Naive thymus-derived CD4-positive, alpha-beta T cell (primary cell): ENCODE measurements at regions of chr15 and their contacts with region 1.

Region 1: DNA sequence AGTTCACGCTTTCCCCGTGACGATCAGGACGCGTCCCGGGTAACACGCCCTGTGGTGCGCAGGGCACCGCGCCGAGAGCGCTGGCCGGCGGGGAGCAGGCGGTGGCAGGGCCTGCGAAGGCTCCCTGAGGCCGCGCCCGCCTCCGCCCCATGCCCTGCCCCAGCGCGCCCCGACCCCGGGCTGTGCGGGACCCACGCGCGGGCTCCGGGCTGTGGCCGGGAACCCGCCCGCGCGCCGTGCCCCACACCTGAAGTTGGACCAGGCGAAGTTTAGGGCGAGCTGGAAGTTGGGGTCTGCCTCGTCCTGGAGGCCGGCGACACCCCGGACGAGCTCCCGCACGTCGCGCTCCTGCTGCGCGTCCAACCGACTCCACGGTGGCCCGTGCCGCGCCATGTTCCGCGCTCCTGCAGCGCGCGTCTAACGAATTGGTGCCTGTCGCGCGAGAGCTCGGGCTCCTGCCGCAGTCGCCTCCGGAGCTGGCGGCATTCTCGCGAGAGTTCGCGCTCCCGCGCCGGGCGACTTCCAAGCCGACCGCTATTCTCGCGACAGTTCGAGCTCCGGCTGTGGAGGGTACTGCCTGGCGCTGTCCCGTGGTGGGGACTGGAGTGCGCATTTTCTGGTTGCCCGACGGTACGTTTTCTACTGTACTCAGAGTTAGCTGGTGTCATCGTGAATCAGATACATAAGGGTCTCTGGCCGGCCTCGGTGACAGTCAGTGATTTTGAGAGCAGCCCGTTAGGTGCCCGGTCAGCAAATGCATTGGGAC is at the start of gene TUBGCP5:
- DNase-seq: peak; percentile 93 to 98 (median 95)
- ATAC-seq: peak; percentile 97
- H3K4me3 ChIP-seq: peak within 1 kb of the TSS; percentile 78
- H3K4me3 Mint-ChIP-seq: peak within 1 kb of the TSS; percentile 91 to 99 (median 96)
- H3K27ac ChIP-seq: peak within 1 kb of the TSS; percentile 62
- H3K27ac Mint-ChIP-seq: peak within 1 kb of the TSS; percentile 86 to 97 (median 91)
- H3K4me1 ChIP-seq: peaks cover 13 to 14% of the 10 kb centered on the region in 2 donors
- H3K4me1 Mint-ChIP-seq: peaks cover 11 to 39% (median 24%) of the 10 kb centered on the region in 7 donors
- H3K27me3 ChIP-seq: no peaks in the 10 kb centered on the region
- H3K27me3 Mint-ChIP-seq: no peaks in the 10 kb centered on the region
- total RNA-seq, gene TUBGCP5: 15.7 to 28.6 (median 23.5) TPM

Region 2: DNA sequence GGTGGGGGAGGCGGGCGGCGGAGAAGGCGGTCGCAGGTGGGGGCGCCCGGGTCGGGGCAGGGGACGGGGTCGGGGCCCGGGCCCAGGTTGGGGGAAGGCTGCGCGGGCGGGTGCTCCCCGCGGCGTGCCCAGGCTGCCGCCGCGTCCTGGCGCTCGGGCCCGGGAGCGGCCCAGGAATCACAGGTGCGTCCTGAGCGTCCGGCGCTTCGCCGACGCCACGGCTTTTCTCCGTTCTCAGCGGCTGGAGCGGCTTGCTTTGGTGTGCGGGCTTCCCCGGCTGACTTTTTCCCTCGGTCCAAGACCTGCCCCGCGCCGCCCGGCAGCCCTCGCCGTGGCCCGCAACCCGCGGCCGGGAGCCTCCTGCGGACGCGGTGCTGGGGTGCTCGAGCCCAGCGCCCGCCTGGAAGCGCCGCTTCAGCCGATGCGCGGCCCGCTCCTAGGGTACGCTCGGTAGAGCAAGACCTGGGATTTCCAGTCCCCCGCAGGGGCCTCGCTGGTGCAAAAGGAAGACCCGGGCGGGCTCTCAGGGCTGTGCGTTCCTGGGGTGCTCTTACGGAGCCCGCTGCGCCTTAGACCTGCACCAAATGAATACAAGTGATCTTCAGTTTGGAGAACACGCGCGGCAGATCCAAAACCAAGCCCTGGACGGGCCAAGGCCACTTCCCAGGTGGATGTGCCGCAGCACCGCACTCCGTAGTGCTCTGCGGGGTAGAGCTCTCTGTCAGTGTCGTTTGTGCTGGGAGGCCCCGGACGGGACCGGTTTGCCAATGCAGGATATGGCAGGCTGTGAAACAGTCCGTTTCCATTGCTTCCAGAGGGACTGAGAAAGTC is 252.3 kb before region 1 on chr15:
- CTCF ChIA-PET with region 1: no interaction called
- POLR2A ChIA-PET with region 1: no interaction called
- intact Hi-C with region 1: loop called (anchors 1 to 5 kb)
- DNase-seq: peak in 7 of 9 donors; percentile 4 to 51 (median 23)
- ATAC-seq: peak; percentile 20
- H3K4me3 ChIP-seq: peak overlapping the region; percentile 66
- H3K4me3 Mint-ChIP-seq: peak overlapping the region; percentile 81 to 89 (median 85)
- H3K27ac ChIP-seq: peak overlapping the region; percentile 70
- H3K27ac Mint-ChIP-seq: peak overlapping the region; percentile 52 to 87 (median 72)
- H3K4me1 ChIP-seq: peaks cover 0 to 4% of the 10 kb centered on the region in 2 donors
- H3K4me1 Mint-ChIP-seq: peaks cover 10 to 22% (median 15%) of the 10 kb centered on the region in 7 donors
- H3K27me3 ChIP-seq: no peaks in the 10 kb centered on the region
- H3K27me3 Mint-ChIP-seq: peaks cover 0 to 5% (median 0%) of the 10 kb centered on the region in 5 donors

Region 3: DNA sequence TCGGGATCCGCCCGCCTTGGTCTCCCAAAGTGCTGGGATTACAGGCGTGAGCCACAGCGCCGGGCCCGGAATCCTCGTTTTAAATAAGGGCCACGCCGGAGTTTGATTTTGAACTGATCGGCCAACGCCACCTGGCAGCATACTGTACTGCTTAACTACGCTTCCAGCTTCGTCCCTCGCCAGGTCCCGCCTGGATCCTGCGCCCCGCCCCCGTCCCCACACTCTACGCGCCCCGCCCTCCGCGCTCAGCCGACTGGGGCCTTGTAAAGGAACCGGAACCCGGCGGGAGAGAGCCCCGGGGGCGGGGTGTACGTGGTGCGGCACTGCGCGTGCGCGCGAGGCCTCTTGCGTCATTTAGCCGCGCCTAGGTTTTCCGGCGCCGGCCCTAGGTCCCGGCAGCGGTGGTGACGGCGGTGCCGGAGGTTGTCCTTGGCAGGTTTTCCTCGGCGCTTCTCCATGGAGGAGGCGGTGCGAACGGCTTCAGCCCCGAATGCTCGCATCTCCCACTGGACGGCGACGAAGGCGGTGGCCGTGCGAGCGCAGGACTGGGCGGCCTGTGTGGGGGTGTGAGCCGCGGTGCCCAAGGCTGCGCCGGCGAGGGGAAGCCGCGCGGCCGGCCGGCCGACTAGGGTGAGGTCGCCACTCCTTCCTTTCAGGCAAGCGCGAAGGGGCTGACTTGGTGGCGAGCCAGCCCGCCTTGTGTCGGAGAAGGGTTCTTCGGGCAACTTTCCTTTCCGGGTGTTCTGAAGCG is 200.9 kb before region 1 on chr15 and contains the start of gene NIPA2:
- CTCF ChIA-PET with region 1: interaction called, 3 read pairs
- POLR2A ChIA-PET with region 1: no interaction called
- intact Hi-C with region 1: loop called (anchors 1 to 5 kb)
- DNase-seq: peak; percentile 97 to 99 (median 98)
- ATAC-seq: peak; percentile 98
- H3K4me3 ChIP-seq: peak within 1 kb of the TSS; percentile 95
- H3K4me3 Mint-ChIP-seq: peak within 1 kb of the TSS; percentile 89 to 99 (median 94)
- H3K27ac ChIP-seq: peak within 1 kb of the TSS; percentile 98
- H3K27ac Mint-ChIP-seq: peak within 1 kb of the TSS; percentile 81 to 99 (median 94)
- H3K4me1 ChIP-seq: peaks cover 15 to 18% of the 10 kb centered on the region in 2 donors
- H3K4me1 Mint-ChIP-seq: peaks cover 18 to 41% (median 29%) of the 10 kb centered on the region in 7 donors
- H3K27me3 ChIP-seq: no peaks in the 10 kb centered on the region
- H3K27me3 Mint-ChIP-seq: peaks cover 0 to 4% (median 0%) of the 10 kb centered on the region in 5 donors
- total RNA-seq, gene NIPA2: 28.7 to 42.0 (median 35.4) TPM

Region 4: GRCh38 chr15:22978691-22979520 is 60.4 kb before region 1 on chr15:
- CTCF ChIA-PET with region 1: no interaction called
- POLR2A ChIA-PET with region 1: no interaction called
- intact Hi-C with region 1: loop called in 1 of 2 experiments (anchors 2 kb)
- DNase-seq: peak in 3 of 9 donors; percentile 8 to 51 (median 16)
- ATAC-seq: peak; percentile 52
- H3K4me3 ChIP-seq: peak overlapping the region; percentile 54
- H3K4me3 Mint-ChIP-seq: peak overlapping the region; percentile 81 to 98 (median 89)
- H3K27ac ChIP-seq: no peak overlapping the region
- H3K27ac Mint-ChIP-seq: no peak overlapping the region
- H3K4me1 ChIP-seq: no peaks in the 10 kb centered on the region
- H3K4me1 Mint-ChIP-seq: peaks cover 11 to 20% (median 15%) of the 10 kb centered on the region in 7 donors
- H3K27me3 ChIP-seq: peaks cover 0 to 5% of the 10 kb centered on the region in 2 donors
- H3K27me3 Mint-ChIP-seq: peaks cover 16 to 28% (median 20%) of the 10 kb centered on the region in 5 donors

Region 5: GRCh38 chr15:23565395-23566070 is 526.2 kb after region 1 on chr15 and contains the start of gene MKRN3:
- CTCF ChIA-PET with region 1: no interaction called
- POLR2A ChIA-PET with region 1: no interaction called
- intact Hi-C with region 1: loop called in 1 of 2 experiments (anchors 5 kb)
- DNase-seq: peak in 8 of 9 donors; percentile 14 to 68 (median 47)
- ATAC-seq: no peak
- H3K4me3 ChIP-seq: peak within 1 kb of the TSS; percentile 39
- H3K4me3 Mint-ChIP-seq: peak within 1 kb of the TSS; percentile 42 to 86 (median 72)
- H3K27ac ChIP-seq: peak within 1 kb of the TSS; percentile 70
- H3K27ac Mint-ChIP-seq: peak within 1 kb of the TSS in 8 of 9 donors; percentile 75 to 93 (median 82)
- H3K4me1 ChIP-seq: no peaks in the 10 kb centered on the region
- H3K4me1 Mint-ChIP-seq: peaks cover 0 to 13% (median 0%) of the 10 kb centered on the region in 7 donors
- H3K27me3 ChIP-seq: no peaks in the 10 kb centered on the region
- H3K27me3 Mint-ChIP-seq: peaks cover 0 to 13% (median 6%) of the 10 kb centered on the region in 5 donors
- total RNA-seq, gene MKRN3: 0.37 to 11.5 (median 1.8) TPM